T-cell (primary cell): ENCODE measurements at regions of chr7 and their contacts with region 1.

Region 1: DNA sequence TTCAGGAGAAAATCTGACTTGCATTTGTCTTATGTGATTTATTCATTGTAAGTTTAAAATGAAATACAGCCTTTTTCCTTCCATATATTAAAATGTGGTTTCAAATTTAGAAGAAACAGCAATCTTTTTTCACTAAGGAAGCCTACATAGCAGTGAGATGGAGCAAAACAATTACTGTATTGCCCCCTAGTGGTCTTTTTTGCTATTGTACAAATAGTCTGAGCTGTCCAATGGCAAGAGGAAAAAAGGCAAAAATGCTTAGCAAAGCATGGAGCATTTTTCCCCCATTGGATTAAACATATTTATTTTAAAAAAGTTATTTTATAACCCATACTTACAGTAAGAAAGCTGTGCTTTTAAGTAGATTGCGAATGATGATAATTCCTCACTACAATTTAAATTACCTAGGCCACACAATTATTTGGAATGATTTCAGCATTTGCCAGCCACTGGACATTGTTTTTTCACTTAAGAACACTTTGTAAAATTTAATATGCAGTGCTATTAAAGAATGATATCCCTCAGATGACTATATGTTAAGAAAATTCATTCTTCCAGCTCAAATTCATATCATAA is 119.5 kb downstream of the CPED1 start:
- DNase-seq: peak in 1 of 35 experiments; percentile 66
- ATAC-seq: peak in 3 of 4 experiments; percentile 62 to 81 (median 66)
- H3K4me3 ChIP-seq: no peak overlapping the region
- H3K4me3 Mint-ChIP-seq: no peak overlapping the region
- H3K27ac ChIP-seq: no peak overlapping the region
- H3K27ac Mint-ChIP-seq: no peak overlapping the region
- H3K4me1 ChIP-seq: no peaks in the 10 kb centered on the region
- H3K4me1 Mint-ChIP-seq: no peaks in the 10 kb centered on the region
- H3K27me3 ChIP-seq: no peaks in the 10 kb centered on the region
- H3K27me3 Mint-ChIP-seq: peaks cover 7 to 14% of the 10 kb centered on the region in 2 donors

Region 2: GRCh38 chr7:120792091-120792860 is 315.7 kb before region 1 on chr7:
- CTCF ChIA-PET with region 1: interaction called, 9 to 10 read pairs
- POLR2A ChIA-PET with region 1: no interaction called
- DNase-seq: peak in 33 of 35 experiments; percentile 4 to 65 (median 30)
- ATAC-seq: peak in 3 of 4 experiments; percentile 42 to 69 (median 50)
- H3K4me3 ChIP-seq: no peak overlapping the region
- H3K4me3 Mint-ChIP-seq: no peak overlapping the region
- H3K27ac ChIP-seq: no peak overlapping the region
- H3K27ac Mint-ChIP-seq: no peak overlapping the region
- H3K4me1 ChIP-seq: no peaks in the 10 kb centered on the region
- H3K4me1 Mint-ChIP-seq: no peaks in the 10 kb centered on the region
- H3K27me3 ChIP-seq: no peaks in the 10 kb centered on the region
- H3K27me3 Mint-ChIP-seq: peaks cover 2 to 12% of the 10 kb centered on the region in 2 donors

Region 3: DNA sequence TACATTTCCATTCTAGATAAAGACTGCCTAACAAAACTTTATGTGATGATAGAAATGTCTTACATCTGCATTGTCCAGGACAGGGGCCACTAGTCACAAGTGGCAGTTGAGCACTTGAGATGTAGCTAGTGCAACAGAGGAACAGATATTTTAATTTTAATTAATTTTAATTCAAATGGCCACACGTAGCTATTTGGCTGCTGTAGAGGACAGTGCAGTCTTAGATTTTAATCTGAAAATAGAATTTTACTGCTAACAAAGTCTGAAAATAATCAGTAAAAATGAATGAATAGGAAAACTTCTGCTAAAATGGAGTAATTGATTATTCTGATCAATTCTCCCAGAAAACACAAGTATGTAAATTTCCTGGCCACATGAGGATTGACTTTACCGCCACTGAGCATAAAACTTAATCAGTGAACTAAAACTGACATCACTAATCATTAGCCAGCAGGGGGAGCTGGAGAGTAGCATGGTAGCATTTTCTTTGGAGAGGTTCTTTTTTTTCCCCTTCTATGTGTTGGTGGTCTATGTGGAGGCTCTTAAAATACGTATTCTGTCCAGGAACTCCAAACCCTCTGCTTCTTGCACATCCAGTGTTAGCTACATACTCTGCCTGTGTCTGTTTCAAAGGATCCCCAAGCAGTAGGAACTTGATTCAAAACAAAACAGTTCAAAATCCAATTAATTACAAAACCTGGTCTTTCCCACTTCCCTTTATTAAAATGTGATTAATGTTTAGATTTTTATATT is 302.2 kb before region 1 on chr7:
- CTCF ChIA-PET with region 1: interaction called, 3 to 15 read pairs
- POLR2A ChIA-PET with region 1: no interaction called
- DNase-seq: peak in 29 of 35 experiments; percentile 1 to 72 (median 27)
- ATAC-seq: peak in 2 of 4 experiments; percentile 38 to 57
- H3K4me3 ChIP-seq: no peak overlapping the region
- H3K4me3 Mint-ChIP-seq: no peak overlapping the region
- H3K27ac ChIP-seq: no peak overlapping the region
- H3K27ac Mint-ChIP-seq: no peak overlapping the region
- H3K4me1 ChIP-seq: no peaks in the 10 kb centered on the region
- H3K4me1 Mint-ChIP-seq: no peaks in the 10 kb centered on the region
- H3K27me3 ChIP-seq: no peaks in the 10 kb centered on the region
- H3K27me3 Mint-ChIP-seq: peaks cover 10 to 11% of the 10 kb centered on the region in 2 donors

Region 4: GRCh38 chr7:120987683-120988590 is 120.1 kb before region 1 on chr7:
- CTCF ChIA-PET with region 1: interaction called, 13 to 15 read pairs
- POLR2A ChIA-PET with region 1: no interaction called
- DNase-seq: peak; percentile 65 to 93 (median 84)
- ATAC-seq: peak; percentile 97 to 99 (median 98)
- H3K4me3 ChIP-seq: peak overlapping the region in 1 of 2 donors; percentile 28
- H3K4me3 Mint-ChIP-seq: peak overlapping the region; percentile 43 to 74 (median 60)
- H3K27ac ChIP-seq: no peak overlapping the region
- H3K27ac Mint-ChIP-seq: no peak overlapping the region
- H3K4me1 ChIP-seq: peaks cover 9 to 15% of the 10 kb centered on the region in 2 experiments
- H3K4me1 Mint-ChIP-seq: peaks cover 18 to 21% (median 21%) of the 10 kb centered on the region in 3 donors
- H3K27me3 ChIP-seq: peaks cover 0 to 24% of the 10 kb centered on the region in 2 experiments
- H3K27me3 Mint-ChIP-seq: peaks cover 45 to 55% of the 10 kb centered on the region in 2 donors